Psoas muscle (tissue), 8 donors: ENCODE measurements at regions of chr1 and their contacts with region 1.

Region 1: GRCh38 chr1:6269720-6270400 is 9.0 kb upstream of the GPR153 start:
- DNase-seq: no peak
- ATAC-seq: no peak
- H3K4me3 ChIP-seq: no peak overlapping the region
- H3K27ac ChIP-seq: no peak overlapping the region
- H3K4me1 ChIP-seq: no peaks in the 10 kb centered on the region
- H3K27me3 ChIP-seq: peaks cover 0 to 3% (median 0%) of the 10 kb centered on the region in 3 donors
- CTCF ChIP-seq: no peak

Region 2: GRCh38 chr1:6108937-6109614 is 160.8 kb before region 1 on chr1:
- intact Hi-C with region 1: no loop called
- DNase-seq: peak; percentile 15 to 49
- ATAC-seq: peak in 1 of 4 donors; percentile 49
- H3K4me3 ChIP-seq: no peak overlapping the region
- H3K27ac ChIP-seq: no peak overlapping the region
- H3K4me1 ChIP-seq: no peaks in the 10 kb centered on the region
- H3K27me3 ChIP-seq: peaks cover 0 to 24% (median 3%) of the 10 kb centered on the region in 3 donors
- CTCF ChIP-seq: no peak

Region 3: GRCh38 chr1:6300342-6301048 is 30.6 kb after region 1 on chr1:
- intact Hi-C with region 1: loop called in 1 of 2 experiments (anchors 5 kb)
- DNase-seq: no peak
- ATAC-seq: no peak
- H3K4me3 ChIP-seq: no peak overlapping the region
- H3K27ac ChIP-seq: no peak overlapping the region
- H3K4me1 ChIP-seq: no peaks in the 10 kb centered on the region
- H3K27me3 ChIP-seq: no peaks in the 10 kb centered on the region
- CTCF ChIP-seq: no peak